Left cardiac atrium (tissue), 4 donors: ENCODE measurements at regions of chr12 and their contacts with region 1.

Region 1: GRCh38 chr12:124567661-124568373 is 405 bp upstream of the NCOR2 start:
- DNase-seq: peak; percentile 96
- ATAC-seq: peak; percentile 82 to 88

Region 2: DNA sequence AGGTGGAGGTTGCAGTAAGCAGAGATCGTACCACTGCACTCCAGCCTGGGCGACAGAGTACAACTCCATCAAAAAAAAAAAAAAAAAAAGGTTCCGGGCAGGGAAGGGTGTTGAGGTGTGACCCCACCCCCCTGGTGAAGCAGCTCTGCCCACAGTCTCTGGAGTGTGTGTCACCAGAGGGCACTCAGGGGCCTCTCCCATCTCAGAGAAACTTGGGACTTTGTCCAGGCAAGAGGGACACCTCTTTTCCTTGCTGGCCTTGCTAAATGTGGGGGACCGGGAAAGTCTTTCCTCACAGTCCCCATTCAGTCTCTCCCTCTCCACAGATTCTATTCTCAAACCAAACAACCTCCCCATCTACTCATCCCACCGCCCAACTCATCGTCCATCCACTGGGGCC is 229.4 kb before region 1 on chr12:
- intact Hi-C with region 1: no loop called
- DNase-seq: no peak
- ATAC-seq: no peak

Region 3: GRCh38 chr12:124388679-124389536 is 178.9 kb before region 1 on chr12:
- intact Hi-C with region 1: loop called (anchors 10 kb)
- DNase-seq: peak; percentile 92
- ATAC-seq: peak; percentile 69 to 70

Region 4: DNA sequence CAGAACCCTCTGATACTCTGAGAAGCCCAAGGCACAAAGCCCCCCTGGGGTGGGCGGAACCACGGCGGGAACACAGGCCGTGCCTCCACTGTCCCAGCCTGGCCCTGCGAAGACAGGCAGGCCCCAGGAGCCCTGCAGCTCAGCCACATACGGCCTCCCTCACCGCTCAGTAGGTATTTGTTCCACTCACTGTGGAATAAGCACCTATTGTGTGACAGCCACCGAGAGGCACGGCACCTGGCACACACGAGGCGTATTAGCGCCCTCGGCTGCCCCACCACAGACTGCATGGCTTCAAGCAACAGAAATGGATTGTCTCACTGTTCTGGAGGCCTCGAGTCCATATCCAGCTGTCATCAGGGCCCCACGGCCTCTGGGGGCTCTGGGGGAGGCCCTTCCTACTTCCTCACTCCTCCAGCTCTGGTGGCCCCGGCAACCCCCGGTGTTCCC is 66.7 kb before region 1 on chr12:
- intact Hi-C with region 1: no loop called
- DNase-seq: no peak
- ATAC-seq: no peak

Region 5: GRCh38 chr12:124518051-124518932 is 49.5 kb before region 1 on chr12:
- intact Hi-C with region 1: loop called (anchors 5 to 10 kb)
- DNase-seq: peak; percentile 98
- ATAC-seq: peak; percentile 72 to 75

Region 6: DNA sequence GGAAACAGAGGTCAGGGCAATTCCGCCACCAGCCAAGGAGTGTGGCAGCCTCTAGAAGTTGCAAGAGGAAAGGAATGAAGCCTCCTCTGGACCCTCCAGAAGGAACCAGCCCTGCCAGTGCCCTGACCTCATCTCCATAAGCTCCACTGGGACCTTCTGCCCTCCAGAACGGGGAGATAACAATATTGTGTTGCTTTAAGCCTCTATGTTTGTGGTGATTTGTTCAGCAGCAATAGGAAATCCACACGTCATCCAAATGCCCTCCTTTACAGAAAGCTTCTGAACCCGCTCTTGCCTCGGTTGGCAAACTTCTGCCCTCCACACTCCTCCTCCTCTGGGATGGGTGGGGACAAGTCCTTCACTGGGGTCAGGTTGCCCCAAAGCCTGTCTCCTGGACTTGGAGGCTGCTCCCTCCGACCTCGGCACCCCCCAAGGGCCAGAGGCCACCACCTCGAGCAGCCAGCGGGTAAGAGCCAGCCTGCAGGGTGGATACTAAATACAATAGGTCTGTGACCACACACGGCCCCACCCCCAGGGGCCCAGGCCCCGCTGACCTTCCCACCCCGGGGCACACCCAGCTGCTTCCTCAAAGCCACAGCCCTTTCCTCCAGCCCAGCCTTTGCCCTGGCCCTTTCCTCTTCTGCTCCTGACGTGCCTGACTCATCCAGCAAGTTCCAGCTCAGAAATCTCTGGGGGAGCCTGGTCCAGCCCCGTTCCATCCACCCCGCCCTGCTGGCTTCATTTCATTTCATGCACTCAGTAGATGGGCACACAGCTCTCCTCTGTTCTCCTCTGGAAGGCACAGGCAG is 58.3 kb after region 1 on chr12:
- intact Hi-C with region 1: no loop called
- DNase-seq: peak; percentile 94
- ATAC-seq: peak; percentile 87 to 93

Region 7: GRCh38 chr12:124655698-124656516 is 88.1 kb after region 1 on chr12:
- intact Hi-C with region 1: loop called in 1 of 2 experiments (anchors 10 kb)
- DNase-seq: peak; percentile 87
- ATAC-seq: peak; percentile 73 to 85

Region 8: DNA sequence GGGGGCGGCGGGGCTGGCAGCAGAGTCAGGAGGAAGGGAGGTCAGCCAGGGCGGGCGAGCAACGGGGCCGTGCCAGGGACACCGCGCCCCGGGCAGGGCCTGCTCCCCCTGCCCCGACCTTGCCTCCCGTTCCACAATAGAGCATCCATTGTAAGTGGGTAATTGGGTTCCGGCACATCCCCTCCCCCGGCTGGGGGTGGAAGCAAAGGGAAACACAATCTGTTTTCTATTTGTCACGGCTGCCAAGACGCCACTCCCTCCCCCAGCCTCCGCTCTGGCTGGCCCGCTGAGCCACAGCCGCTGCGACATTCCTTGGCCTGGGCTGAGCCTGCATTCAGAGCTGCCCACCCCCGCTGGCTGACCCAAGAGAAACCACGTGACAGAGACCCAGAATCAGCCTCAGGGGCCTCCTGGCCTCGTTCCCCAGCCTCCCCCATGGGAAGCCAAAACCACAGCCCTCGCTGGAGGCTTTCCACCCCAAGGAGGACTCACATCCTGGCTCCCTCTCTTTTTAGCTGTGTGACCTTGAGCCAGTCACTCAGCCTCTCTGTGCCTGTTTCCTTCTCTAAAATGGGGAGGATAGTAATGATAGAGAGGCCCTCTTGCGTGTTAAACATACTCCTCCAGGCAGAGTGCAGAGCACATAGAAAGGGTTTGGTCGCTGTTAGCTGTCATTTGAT is 178.2 kb after region 1 on chr12:
- intact Hi-C with region 1: loop called in 1 of 2 experiments (anchors 5 kb)
- DNase-seq: peak; percentile 96
- ATAC-seq: peak; percentile 96 to 97